Activated CD8-positive, alpha-beta T cell treated with anti-CD3 and anti-CD28 coated beads for 36 hours (primary cell): ENCODE measurements at regions of chr2 and their contacts with region 1.

Region 1: GRCh38 chr2:102240640-102241370 is 54.0 kb downstream of the IL1RL2 start:
- DNase-seq: peak; percentile 92
- ATAC-seq: peak; percentile 90
- H3K4me3 Mint-ChIP-seq: no peak overlapping the region
- H3K27ac Mint-ChIP-seq: peak overlapping the region; percentile 65
- H3K4me1 Mint-ChIP-seq: peaks cover 32% of the 10 kb centered on the region
- H3K27me3 Mint-ChIP-seq: no peaks in the 10 kb centered on the region
- CTCF ChIP-seq: peak; percentile 92

Region 2: DNA sequence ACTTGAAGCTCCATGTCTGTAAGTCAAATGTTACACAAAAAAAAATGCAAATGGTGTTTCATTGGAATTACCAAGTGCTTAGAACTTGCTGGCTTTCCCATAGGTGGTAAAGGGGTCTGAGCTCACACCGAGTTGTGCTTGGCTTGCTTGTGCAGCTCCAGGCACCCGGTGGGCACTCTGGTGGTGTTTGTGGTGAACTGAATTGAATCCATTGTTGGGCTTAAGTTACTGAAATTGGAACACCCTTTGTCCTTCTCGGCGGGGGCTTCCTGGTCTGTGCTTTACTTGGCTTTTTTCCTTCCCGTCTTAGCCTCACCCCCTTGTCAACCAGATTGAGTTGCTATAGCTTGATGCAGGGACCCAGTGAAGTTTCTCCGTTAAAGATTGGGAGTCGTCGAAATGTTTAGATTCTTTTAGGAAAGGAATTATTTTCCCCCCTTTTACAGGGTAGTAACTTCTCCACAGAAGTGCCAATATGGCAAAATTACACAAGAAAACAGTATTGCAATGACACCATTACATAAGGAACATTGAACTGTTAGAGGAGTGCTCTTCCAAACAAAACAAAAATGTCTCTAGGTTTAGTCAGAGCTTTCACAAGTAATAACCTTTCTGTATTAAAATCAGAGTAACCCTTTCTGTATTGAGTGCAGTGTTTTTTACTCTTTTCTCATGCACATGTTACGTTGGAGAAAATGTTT is 347.0 kb before region 1 on chr2:
- CTCF ChIA-PET with region 1: interaction called, 4 read pairs
- POLR2A ChIA-PET with region 1: no interaction called
- intact Hi-C with region 1: loop called (anchors 10 kb)
- DNase-seq: no peak
- ATAC-seq: no peak
- H3K4me3 Mint-ChIP-seq: no peak overlapping the region
- H3K27ac Mint-ChIP-seq: no peak overlapping the region
- H3K4me1 Mint-ChIP-seq: peaks cover 10% of the 10 kb centered on the region
- H3K27me3 Mint-ChIP-seq: no peaks in the 10 kb centered on the region
- CTCF ChIP-seq: no peak

Region 3: DNA sequence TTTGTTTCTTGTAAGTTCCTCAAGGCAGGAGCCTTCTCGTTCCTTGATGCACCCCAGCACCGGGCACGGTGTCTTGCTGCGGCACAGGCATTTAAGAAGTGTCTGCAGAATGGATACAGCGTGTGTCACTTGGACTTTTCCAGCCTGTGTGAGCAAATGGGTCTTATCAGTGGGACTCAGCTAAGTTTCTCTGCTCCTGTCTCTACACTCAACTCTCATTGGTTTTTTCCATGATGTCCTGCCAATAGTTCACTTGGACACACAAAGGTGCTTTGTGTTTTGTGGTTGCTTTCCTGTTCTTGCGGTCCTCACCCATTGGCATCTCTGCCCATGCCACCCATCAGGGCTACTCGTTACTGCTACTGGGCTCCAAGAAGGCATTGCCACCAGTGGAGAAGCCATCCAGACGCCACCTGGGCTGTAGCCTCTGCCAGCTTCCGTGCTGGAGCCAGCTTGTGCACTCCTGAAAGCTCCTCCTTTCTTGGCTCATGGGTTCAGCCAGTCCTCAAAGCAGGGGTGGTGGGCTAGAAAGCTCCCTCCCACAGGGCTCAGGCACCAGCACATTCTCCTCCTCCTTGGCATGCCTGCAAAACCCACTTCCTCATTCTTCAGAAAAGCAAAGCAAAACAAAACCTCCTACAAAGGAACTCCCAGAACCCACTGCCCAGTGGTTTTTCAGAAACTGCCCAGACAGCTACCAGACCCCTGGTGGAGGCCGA is 207.6 kb before region 1 on chr2:
- CTCF ChIA-PET with region 1: interaction called, 19 read pairs
- POLR2A ChIA-PET with region 1: interaction called, 3 read pairs
- intact Hi-C with region 1: no loop called
- DNase-seq: peak; percentile 25
- ATAC-seq: peak; percentile 62
- H3K4me3 Mint-ChIP-seq: no peak overlapping the region
- H3K27ac Mint-ChIP-seq: peak overlapping the region; percentile 47
- H3K4me1 Mint-ChIP-seq: peaks cover 37% of the 10 kb centered on the region
- H3K27me3 Mint-ChIP-seq: no peaks in the 10 kb centered on the region
- CTCF ChIP-seq: no peak

Region 4: GRCh38 chr2:102103992-102104871 is 136.6 kb before region 1 on chr2:
- CTCF ChIA-PET with region 1: interaction called, 10 read pairs
- POLR2A ChIA-PET with region 1: no interaction called
- intact Hi-C with region 1: no loop called
- DNase-seq: peak; percentile 88
- ATAC-seq: peak; percentile 84
- H3K4me3 Mint-ChIP-seq: peak overlapping the region; percentile 13
- H3K27ac Mint-ChIP-seq: no peak overlapping the region
- H3K4me1 Mint-ChIP-seq: peaks cover 21% of the 10 kb centered on the region
- H3K27me3 Mint-ChIP-seq: peaks cover 9% of the 10 kb centered on the region
- CTCF ChIP-seq: no peak

Region 5: GRCh38 chr2:102166189-102166845 is 74.5 kb before region 1 on chr2:
- CTCF ChIA-PET with region 1: interaction called, 17 read pairs
- POLR2A ChIA-PET with region 1: no interaction called
- intact Hi-C with region 1: no loop called
- DNase-seq: peak; percentile 14
- ATAC-seq: no peak
- H3K4me3 Mint-ChIP-seq: no peak overlapping the region
- H3K27ac Mint-ChIP-seq: no peak overlapping the region
- H3K4me1 Mint-ChIP-seq: peaks cover 5% of the 10 kb centered on the region
- H3K27me3 Mint-ChIP-seq: no peaks in the 10 kb centered on the region
- CTCF ChIP-seq: no peak

Region 6: DNA sequence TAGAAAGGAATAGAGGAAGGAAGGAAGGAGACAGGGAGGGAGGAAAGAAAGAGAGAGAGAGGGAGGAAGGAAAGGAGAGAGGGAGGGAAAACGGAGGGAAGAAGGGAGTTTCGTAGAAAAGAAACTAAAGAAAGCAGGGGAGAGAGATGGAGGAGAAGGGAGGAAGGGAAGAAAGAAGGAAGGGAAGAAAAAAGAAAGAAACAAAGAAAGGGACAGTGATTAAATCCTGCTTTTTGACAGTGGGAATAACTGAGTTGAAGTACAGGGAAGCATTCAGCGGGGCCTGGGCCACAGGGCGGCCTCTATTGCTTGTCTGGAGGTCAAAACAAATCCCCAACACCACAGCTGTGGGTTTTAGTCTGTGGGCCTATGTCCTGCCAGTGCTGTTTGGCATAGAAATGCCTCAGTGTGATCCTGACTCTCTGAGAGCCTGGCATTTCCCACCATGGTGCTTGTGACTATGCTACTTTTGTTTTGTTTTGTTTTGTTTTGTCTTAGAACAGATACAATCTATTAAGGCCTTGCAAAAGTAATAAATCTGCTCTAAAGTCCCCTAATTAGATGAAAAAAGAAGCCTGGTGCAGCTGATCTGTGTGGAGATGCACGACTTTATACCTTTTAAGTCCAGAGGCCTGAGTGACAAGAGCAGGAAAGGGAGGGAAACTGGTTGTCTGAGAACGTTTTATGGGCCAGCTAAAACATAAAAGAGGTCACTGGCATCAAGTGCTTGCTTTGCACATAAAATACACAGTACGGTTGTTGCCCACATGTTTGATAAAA is 14.0 kb before region 1 on chr2:
- CTCF ChIA-PET with region 1: interaction called, 20 read pairs
- POLR2A ChIA-PET with region 1: no interaction called
- intact Hi-C with region 1: no loop called
- DNase-seq: no peak
- ATAC-seq: no peak
- H3K4me3 Mint-ChIP-seq: no peak overlapping the region
- H3K27ac Mint-ChIP-seq: peak overlapping the region; percentile 86
- H3K4me1 Mint-ChIP-seq: peaks cover 54% of the 10 kb centered on the region
- H3K27me3 Mint-ChIP-seq: no peaks in the 10 kb centered on the region
- CTCF ChIP-seq: no peak

Region 7: GRCh38 chr2:102418421-102418961 is 177.7 kb after region 1 on chr2:
- CTCF ChIA-PET with region 1: interaction called, 14 read pairs
- POLR2A ChIA-PET with region 1: no interaction called
- intact Hi-C with region 1: no loop called
- DNase-seq: no peak
- ATAC-seq: peak; percentile 67
- H3K4me3 Mint-ChIP-seq: peak overlapping the region; percentile 74
- H3K27ac Mint-ChIP-seq: peak overlapping the region; percentile 98
- H3K4me1 Mint-ChIP-seq: peaks cover 59% of the 10 kb centered on the region
- H3K27me3 Mint-ChIP-seq: no peaks in the 10 kb centered on the region
- CTCF ChIP-seq: no peak